ENCODE measurements at regions of chr2 and their contacts with region 1.

Region 1: GRCh38 chr2:70907130-70908057 is 28.3 kb upstream of the ATP6V1B1 start:
- DNase-seq: no peak
- ATAC-seq: no peak
- H3K4me3 Mint-ChIP-seq: peak overlapping the region; percentile 62
- H3K27ac Mint-ChIP-seq: no peak overlapping the region
- H3K4me1 Mint-ChIP-seq: peaks cover 15% of the 10 kb centered on the region
- H3K27me3 Mint-ChIP-seq: peaks cover 69% of the 10 kb centered on the region
- CTCF ChIP-seq: no peak

Region 2: DNA sequence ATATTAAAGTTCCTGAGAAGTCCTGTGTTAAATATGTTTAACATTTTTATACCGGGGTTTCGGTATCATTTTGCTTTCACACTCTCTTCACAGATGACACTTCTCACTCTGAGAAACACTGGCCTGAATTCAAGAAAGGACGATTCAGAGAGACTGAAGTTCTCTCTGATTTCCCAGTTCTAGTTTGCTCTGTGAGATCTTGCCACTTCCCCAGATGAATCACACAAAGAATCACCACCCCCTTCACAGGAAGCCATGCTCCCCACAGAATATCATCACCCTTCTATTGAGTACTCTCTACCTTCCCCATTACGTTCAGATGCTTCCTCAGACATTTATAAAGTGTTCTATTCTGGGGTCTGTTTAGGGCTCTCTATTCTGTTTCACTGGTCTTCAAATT is 55.7 kb before region 1 on chr2:
- CTCF ChIA-PET with region 1: no interaction called
- POLR2A ChIA-PET with region 1: no interaction called
- intact Hi-C with region 1: no loop called
- DNase-seq: no peak
- ATAC-seq: no peak
- H3K4me3 Mint-ChIP-seq: no peak overlapping the region
- H3K27ac Mint-ChIP-seq: no peak overlapping the region
- H3K4me1 Mint-ChIP-seq: no peaks in the 10 kb centered on the region
- H3K27me3 Mint-ChIP-seq: peaks cover 9% of the 10 kb centered on the region
- CTCF ChIP-seq: no peak

Region 3: GRCh38 chr2:70887550-70888246 is 19.7 kb before region 1 on chr2:
- CTCF ChIA-PET with region 1: no interaction called
- POLR2A ChIA-PET with region 1: no interaction called
- intact Hi-C with region 1: loop called (anchors 2 kb)
- DNase-seq: no peak
- ATAC-seq: no peak
- H3K4me3 Mint-ChIP-seq: peak overlapping the region; percentile 76
- H3K27ac Mint-ChIP-seq: no peak overlapping the region
- H3K4me1 Mint-ChIP-seq: peaks cover 27% of the 10 kb centered on the region
- H3K27me3 Mint-ChIP-seq: peaks cover 67% of the 10 kb centered on the region
- CTCF ChIP-seq: no peak

Measured in activated B cell treated with CpG ODN at 0.5 μM for 24 hours (primary cell).